PC-3 (cell line): ENCODE measurements at regions of chr2 and their contacts with region 1.

Region 1: GRCh38 chr2:119753041-119753929 is 6.4 kb upstream of the PTPN4 start:
- DNase-seq: peak; percentile 68
- ATAC-seq: peak; percentile 58
- H3K4me3 ChIP-seq: no peak overlapping the region
- H3K27ac ChIP-seq: no peak overlapping the region
- H3K4me1 ChIP-seq: peaks cover 45% of the 10 kb centered on the region
- H3K27me3 ChIP-seq: no peaks in the 10 kb centered on the region
- CTCF ChIP-seq: peak; percentile 79

Region 2: DNA sequence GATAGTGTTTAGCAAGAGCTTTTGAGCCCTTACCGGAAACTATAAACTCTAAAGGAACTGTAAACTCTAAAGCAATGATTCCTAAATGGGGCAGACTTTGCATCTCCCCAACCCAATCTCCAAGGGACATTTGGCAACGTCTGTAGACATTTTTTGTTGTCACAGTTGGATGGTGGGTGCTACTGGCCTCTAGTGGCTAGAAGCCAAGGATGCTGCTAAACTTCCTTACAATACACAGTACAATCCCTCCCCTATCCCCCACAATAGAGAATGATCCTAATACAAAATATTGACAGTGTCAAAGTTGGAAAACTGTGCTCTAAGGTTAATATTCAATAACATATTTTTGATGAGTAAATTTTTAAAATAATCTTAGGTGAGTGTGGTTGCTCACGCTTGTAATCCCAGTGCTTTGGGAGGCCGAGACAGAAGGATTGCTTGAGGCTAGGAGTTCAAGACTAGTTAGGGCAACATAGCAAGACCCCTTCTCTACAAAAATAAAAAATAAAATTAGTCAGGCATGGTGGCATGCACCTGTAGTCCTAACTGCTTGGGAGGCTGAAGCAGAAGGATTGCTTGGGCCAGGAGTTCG is 73.2 kb after region 1 on chr2:
- CTCF ChIA-PET with region 1: interaction called, 12 read pairs
- POLR2A ChIA-PET with region 1: no interaction called
- intact Hi-C with region 1: loop called (anchors 1 kb)
- DNase-seq: peak; percentile 67
- ATAC-seq: peak; percentile 57
- H3K4me3 ChIP-seq: no peak overlapping the region
- H3K27ac ChIP-seq: no peak overlapping the region
- H3K4me1 ChIP-seq: peaks cover 30% of the 10 kb centered on the region
- H3K27me3 ChIP-seq: no peaks in the 10 kb centered on the region
- CTCF ChIP-seq: peak; percentile 88

Region 3: DNA sequence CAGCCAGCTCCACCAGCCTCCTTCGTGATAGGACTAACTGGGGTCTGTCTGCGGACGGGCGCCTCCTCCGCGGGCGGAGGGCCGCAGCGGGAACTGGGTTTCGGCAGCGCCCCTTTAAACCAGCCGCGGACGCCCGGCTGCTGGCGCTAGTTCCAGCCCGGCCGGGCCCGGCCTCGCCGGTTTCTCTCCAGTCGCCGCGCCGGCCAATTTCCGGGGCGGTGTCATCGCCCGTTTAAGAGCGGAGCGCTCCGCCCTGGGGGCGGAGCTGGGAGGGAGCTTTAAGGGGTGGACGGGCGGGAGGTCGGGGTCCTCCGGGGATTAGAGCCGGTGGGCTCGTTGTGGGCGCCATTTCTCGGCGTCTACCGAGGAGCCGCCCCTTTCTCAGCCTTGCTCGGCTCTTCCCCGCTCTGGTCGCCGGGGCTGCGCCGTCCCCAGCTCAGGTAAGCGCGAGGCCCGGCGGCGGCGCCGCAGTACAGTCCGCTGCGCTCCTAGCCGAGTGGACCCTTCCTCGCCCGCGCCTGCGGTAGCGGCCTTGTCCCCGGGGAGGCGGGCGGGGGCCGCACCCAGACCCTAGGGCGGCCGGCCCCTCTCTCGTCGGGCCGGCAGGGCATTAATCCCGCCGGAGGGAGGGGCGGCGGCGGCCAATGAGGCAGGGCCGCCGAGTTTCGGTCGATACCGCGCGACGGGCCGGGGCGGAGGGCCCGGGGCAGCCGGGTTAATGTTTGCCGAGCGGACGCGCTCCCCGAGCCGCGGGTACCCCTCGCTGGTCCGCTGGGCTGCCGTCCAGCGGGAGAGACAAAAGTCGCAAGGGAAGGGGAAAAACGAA is 259.7 kb after region 1 on chr2 and contains the start of gene EPB41L5:
- CTCF ChIA-PET with region 1: no interaction called
- POLR2A ChIA-PET with region 1: no interaction called
- intact Hi-C with region 1: loop called (anchors 2 kb)
- DNase-seq: peak; percentile 96
- ATAC-seq: peak; percentile 91
- H3K4me3 ChIP-seq: peak within 1 kb of the TSS; percentile 80
- H3K27ac ChIP-seq: peak within 1 kb of the TSS; percentile 48
- H3K4me1 ChIP-seq: peaks cover 17% of the 10 kb centered on the region
- H3K27me3 ChIP-seq: no peaks in the 10 kb centered on the region
- CTCF ChIP-seq: 0 out of 2 replicates have a peak, but pooled peaks have one; percentile 8
- total RNA-seq, gene EPB41L5: 11.7 and 14.0 TPM in 2 replicates

Region 4: GRCh38 chr2:120346667-120347358 is 593.5 kb after region 1 on chr2:
- CTCF ChIA-PET with region 1: no interaction called
- POLR2A ChIA-PET with region 1: no interaction called
- intact Hi-C with region 1: no loop called
- DNase-seq: no peak
- ATAC-seq: no peak
- H3K4me3 ChIP-seq: peak overlapping the region; percentile 90
- H3K27ac ChIP-seq: peak overlapping the region; percentile 68
- H3K4me1 ChIP-seq: peaks cover 39% of the 10 kb centered on the region
- H3K27me3 ChIP-seq: no peaks in the 10 kb centered on the region
- CTCF ChIP-seq: no peak